Activated CD4-positive, alpha-beta memory T cell treated with anti-CD3 and anti-CD28 coated beads for 36 hours (primary cell): ENCODE measurements at regions of chr9 and their contacts with region 1.

Region 1: DNA sequence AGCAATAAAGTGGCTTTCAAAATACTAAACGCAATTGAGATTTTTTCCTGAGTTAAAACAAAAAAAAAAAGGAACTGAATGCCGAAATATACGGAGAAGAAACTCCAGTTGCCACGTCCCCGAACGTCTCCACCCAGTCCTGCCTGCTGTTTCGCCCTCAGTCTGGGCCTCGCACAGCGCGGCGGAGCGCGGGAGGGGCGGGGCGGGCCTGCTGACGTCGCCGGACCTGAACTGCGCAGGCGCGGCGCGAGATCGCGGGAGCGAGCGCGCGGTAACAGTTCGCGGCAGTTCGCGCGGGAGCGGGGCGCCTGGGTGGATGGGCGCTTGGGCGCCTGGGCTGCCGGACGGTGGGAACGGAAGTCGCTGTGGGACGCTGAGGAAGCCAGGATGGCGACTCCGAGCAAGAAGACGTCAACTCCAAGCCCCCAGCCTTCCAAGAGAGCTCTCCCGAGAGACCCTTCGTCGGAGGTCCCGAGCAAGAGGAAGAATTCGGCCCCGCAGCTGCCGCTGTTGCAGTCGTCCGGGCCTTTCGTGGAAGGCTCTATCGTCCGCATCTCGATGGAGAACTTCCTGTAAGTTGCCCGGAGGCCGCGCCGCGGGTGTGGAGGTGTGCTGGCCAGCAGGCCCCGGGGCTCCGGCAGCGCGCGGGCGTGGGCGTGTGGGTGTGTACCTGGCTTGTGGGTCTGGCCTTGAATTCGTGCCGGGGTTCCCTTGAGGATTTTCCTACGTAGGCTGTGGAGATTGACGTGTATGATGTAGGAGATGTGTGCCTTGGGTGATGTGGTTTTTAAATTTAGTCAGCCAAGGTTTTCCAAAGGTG is at the start of gene SMC5:
- DNase-seq: peak; percentile 92
- H3K4me3 Mint-ChIP-seq: peak within 1 kb of the TSS; percentile 95
- H3K27ac Mint-ChIP-seq: peak within 1 kb of the TSS; percentile 88
- H3K4me1 Mint-ChIP-seq: peaks cover 47% of the 10 kb centered on the region
- H3K27me3 Mint-ChIP-seq: no peaks in the 10 kb centered on the region
- total RNA-seq, gene SMC5: 32.0 to 34.1 TPM

Region 2: GRCh38 chr9:68894502-68894901 is 1364.4 kb before region 1 on chr9:
- CTCF ChIA-PET with region 1: no interaction called
- POLR2A ChIA-PET with region 1: no interaction called
- intact Hi-C with region 1: no loop called
- DNase-seq: no peak
- H3K4me3 Mint-ChIP-seq: peak overlapping the region; percentile 39
- H3K27ac Mint-ChIP-seq: peak overlapping the region; percentile 46
- H3K4me1 Mint-ChIP-seq: peaks cover 31% of the 10 kb centered on the region
- H3K27me3 Mint-ChIP-seq: no peaks in the 10 kb centered on the region

Region 3: DNA sequence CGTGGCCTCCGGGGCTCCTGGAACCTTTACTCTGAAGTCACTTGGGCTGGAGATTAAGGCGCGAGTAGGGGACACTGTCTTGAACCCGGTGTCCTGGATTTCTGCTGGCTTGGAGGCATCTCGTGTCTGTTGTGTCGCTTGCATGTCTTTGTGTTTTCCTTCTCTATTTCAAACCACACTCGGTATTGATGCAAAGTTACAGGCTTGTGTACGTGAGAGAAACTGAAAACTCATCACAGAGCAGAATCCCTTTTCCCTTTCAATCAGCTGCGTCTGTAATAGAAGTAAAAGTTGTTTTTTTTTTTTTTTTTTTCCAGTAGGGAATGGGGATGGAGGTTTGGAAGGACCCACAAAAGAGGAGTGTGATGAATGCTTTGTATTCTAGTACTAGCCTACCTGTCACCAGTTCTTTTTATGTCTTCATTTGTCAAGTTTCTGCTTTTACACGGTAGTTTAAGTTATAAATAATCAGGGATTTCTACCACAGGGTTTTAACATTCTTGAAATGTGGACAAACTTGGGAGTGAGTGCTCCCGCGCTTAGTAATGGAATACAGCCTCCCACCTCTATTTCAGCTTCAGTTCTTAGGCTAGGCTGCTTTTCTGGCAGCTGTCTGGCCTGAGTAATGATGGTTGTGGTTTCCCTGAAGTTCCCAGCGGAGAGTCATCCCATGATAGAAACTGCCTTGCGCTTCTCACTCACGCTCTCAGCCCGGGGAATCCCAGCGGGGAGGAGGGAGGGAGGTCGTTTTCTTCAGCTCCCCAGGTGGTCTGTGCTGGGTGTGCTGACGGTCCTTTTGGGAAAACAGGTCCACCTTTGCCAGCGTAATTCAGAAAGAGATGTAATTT is 1084.1 kb before region 1 on chr9:
- CTCF ChIA-PET with region 1: no interaction called
- POLR2A ChIA-PET with region 1: no interaction called
- intact Hi-C with region 1: loop called (anchors 5 kb)
- DNase-seq: peak; percentile 83
- H3K4me3 Mint-ChIP-seq: peak overlapping the region; percentile 82
- H3K27ac Mint-ChIP-seq: peak overlapping the region; percentile 71
- H3K4me1 Mint-ChIP-seq: peaks cover 54% of the 10 kb centered on the region
- H3K27me3 Mint-ChIP-seq: peaks cover 36% of the 10 kb centered on the region

Region 4: GRCh38 chr9:70111042-70111602 is 147.8 kb before region 1 on chr9:
- CTCF ChIA-PET with region 1: interaction called, 5 read pairs
- POLR2A ChIA-PET with region 1: no interaction called
- intact Hi-C with region 1: loop called (anchors 10 kb)
- DNase-seq: peak; percentile 67
- H3K4me3 Mint-ChIP-seq: no peak overlapping the region
- H3K27ac Mint-ChIP-seq: no peak overlapping the region
- H3K4me1 Mint-ChIP-seq: peaks cover 11% of the 10 kb centered on the region
- H3K27me3 Mint-ChIP-seq: peaks cover 5% of the 10 kb centered on the region

Region 5: DNA sequence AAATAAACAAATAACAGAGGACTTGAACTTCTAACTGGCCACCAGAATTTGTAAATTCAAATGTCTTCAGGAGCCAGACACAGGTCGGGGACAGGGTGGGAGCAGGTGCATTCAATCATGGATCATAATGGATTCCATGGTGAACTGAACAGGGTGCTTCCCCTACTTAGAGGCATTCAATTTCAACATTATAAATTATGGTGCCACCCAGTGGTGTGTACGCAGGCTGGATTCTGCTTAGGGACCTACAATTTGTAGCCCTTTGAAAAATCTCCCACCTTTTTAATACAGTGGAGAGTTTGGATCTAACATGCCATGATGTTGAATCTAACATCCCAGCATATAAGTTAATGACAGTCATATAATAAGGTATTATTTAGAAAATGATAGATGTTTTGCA is 133.3 kb after region 1 on chr9:
- CTCF ChIA-PET with region 1: no interaction called
- POLR2A ChIA-PET with region 1: no interaction called
- intact Hi-C with region 1: loop called (anchors 2 kb)
- DNase-seq: no peak
- H3K4me3 Mint-ChIP-seq: no peak overlapping the region
- H3K27ac Mint-ChIP-seq: no peak overlapping the region
- H3K4me1 Mint-ChIP-seq: peaks cover 78% of the 10 kb centered on the region
- H3K27me3 Mint-ChIP-seq: no peaks in the 10 kb centered on the region

Region 6: GRCh38 chr9:70419546-70420266 is 160.8 kb after region 1 on chr9:
- CTCF ChIA-PET with region 1: no interaction called
- POLR2A ChIA-PET with region 1: interaction called, 4 read pairs
- intact Hi-C with region 1: loop called (anchors 1 kb)
- DNase-seq: peak; percentile 94
- H3K4me3 Mint-ChIP-seq: peak overlapping the region; percentile 92
- H3K27ac Mint-ChIP-seq: peak overlapping the region; percentile 99
- H3K4me1 Mint-ChIP-seq: peaks cover 39% of the 10 kb centered on the region
- H3K27me3 Mint-ChIP-seq: no peaks in the 10 kb centered on the region

Region 7: GRCh38 chr9:70563431-70564204 is 304.7 kb after region 1 on chr9:
- CTCF ChIA-PET with region 1: no interaction called
- POLR2A ChIA-PET with region 1: no interaction called
- intact Hi-C with region 1: loop called (anchors 1 kb)
- DNase-seq: peak; percentile 81
- H3K4me3 Mint-ChIP-seq: peak overlapping the region; percentile 38
- H3K27ac Mint-ChIP-seq: peak overlapping the region; percentile 88
- H3K4me1 Mint-ChIP-seq: peaks cover 47% of the 10 kb centered on the region
- H3K27me3 Mint-ChIP-seq: no peaks in the 10 kb centered on the region